Activated CD4-positive, alpha-beta T cell treated with anti-CD3 and anti-CD28 coated beads, Interleukin-2, amount 10 ng/mL, durations not matched to agents 24 days and 14 days (primary cell): ENCODE measurements at regions of chr9 and their contacts with region 1.

Region 1: DNA sequence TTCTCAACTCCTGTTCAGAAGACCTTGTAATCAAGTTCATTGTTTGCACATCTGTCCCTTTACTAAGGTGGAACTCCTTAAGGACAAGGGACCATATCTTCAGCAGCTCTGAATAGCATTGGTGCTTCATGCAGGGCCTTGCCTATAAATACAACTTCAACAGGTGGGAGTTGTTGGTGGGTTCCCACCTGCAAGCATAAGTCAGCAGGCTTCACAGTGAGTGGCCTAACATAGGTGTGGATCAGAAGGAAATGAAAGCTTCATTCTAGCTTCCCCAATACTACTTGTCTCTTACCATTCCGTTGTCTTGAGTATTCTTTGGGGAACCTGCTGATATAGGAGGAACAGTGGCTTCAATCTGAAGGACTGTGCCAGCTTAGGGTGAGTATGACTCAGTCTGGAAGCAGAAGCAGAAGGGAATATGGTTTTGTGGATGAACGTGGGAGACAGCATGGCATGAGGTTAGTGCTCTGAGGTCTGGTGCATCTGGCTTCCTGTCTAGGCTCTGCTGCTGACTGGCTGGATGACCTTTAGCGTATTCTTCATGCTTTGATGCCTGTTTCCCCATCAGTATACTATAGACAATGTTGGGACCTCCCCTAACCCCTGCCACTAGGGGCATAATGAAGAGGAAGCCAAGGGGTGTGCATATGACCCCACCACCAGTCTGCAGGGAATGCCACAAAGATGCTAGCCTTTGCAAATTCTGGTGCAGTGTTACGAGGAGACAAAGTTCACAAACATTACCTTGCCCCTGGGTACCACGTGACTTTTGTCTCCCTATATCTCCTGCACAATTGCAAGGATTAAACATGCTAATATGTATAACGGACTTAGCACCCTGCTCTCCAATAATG is 192.3 kb downstream of the PALM2AKAP2 start:
- DNase-seq: peak; percentile 71
- H3K4me3 Mint-ChIP-seq: peak overlapping the region; percentile 18
- H3K27ac Mint-ChIP-seq: peak overlapping the region; percentile 82
- H3K4me1 Mint-ChIP-seq: peaks cover 88% of the 10 kb centered on the region
- H3K27me3 Mint-ChIP-seq: no peaks in the 10 kb centered on the region

Region 2: DNA sequence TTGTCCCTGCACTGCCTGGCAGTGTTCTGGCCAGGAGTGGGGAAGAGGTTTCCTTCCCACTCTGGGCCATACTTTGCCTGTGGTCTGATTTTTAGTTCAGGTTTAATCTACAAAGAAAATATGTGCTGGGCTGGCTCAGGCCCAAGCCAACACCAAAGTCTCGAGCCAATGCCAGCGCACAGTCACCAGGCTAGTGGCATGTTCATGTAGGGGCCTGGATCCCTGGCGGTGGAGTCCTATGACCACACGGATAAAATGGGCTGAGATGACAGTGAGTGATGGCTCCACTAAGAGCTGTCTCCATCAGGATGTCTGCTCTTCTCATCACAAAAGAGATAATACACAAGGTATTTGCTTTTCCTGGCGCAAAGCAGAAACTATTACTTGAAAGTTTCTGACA is 381.3 kb before region 1 on chr9:
- intact Hi-C with region 1: no loop called
- DNase-seq: no peak
- H3K4me3 Mint-ChIP-seq: no peak overlapping the region
- H3K27ac Mint-ChIP-seq: no peak overlapping the region
- H3K4me1 Mint-ChIP-seq: no peaks in the 10 kb centered on the region
- H3K27me3 Mint-ChIP-seq: peaks cover 7% of the 10 kb centered on the region

Region 3: GRCh38 chr9:109875495-109876129 is 96.6 kb before region 1 on chr9:
- intact Hi-C with region 1: no loop called
- DNase-seq: no peak
- H3K4me3 Mint-ChIP-seq: no peak overlapping the region
- H3K27ac Mint-ChIP-seq: no peak overlapping the region
- H3K4me1 Mint-ChIP-seq: peaks cover 12% of the 10 kb centered on the region
- H3K27me3 Mint-ChIP-seq: peaks cover 20% of the 10 kb centered on the region

Region 4: DNA sequence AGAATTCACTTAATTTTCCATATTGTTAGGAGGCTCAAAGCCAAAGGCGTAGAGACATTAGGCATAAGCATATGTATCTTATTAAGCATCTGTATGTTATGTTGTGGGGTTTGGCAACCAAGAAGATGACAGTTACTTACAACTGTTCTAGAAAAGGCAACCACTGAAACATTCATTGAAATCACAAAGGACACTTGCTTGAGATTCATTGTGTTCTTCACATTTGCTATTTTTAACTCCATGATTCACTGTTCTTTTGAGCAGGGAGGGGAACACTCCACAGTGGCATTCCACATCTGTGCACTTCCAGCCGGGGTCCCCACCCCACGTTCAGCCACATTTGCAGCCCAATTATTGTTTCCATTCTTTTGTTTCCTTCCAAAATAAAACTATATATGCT is 85.2 kb before region 1 on chr9:
- intact Hi-C with region 1: loop called (anchors 1 kb)
- DNase-seq: no peak
- H3K4me3 Mint-ChIP-seq: peak overlapping the region; percentile 75
- H3K27ac Mint-ChIP-seq: peak overlapping the region; percentile 94
- H3K4me1 Mint-ChIP-seq: peaks cover 69% of the 10 kb centered on the region
- H3K27me3 Mint-ChIP-seq: no peaks in the 10 kb centered on the region

Region 5: GRCh38 chr9:109918339-109919163 is 53.7 kb before region 1 on chr9:
- intact Hi-C with region 1: loop called (anchors 1 kb)
- DNase-seq: peak; percentile 85
- H3K4me3 Mint-ChIP-seq: peak overlapping the region; percentile 85
- H3K27ac Mint-ChIP-seq: peak overlapping the region; percentile 97
- H3K4me1 Mint-ChIP-seq: peaks cover 50% of the 10 kb centered on the region
- H3K27me3 Mint-ChIP-seq: no peaks in the 10 kb centered on the region

Region 6: DNA sequence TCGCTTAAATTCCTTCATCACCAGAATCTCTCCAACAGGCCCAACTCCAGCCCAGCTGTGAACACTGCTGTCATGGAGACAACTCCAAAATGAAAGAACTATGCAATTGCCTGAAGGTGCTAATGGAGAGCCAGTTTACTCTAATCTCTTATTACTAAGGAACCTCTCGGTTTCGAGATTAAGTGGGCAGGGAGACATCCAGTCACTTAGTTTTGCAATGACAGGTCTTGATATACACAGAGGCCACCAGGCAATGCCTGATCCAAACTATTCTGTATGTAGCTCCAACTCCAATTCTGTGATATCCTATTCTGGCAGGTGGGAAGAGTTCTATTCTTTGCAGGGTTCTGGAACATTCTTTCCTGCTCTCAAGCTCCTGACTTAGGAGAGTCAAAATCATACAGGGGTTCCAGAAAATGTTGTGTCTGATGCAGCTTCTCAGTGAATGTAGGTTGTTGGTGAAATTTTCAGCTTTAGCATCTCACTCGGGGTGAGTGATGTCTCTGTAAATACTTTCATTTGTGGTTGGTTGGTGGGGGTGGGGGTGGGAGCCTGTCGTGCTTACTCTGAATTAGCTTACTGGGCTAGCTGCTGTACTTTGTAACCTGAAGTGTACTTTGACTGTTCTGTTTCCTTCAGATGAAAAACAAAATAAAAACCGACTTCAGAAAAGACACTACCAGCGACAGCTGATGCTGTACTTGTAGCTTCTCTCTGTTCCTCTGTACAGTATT is 21.4 kb before region 1 on chr9:
- intact Hi-C with region 1: loop called (anchors 1 kb)
- DNase-seq: peak; percentile 72
- H3K4me3 Mint-ChIP-seq: peak overlapping the region; percentile 65
- H3K27ac Mint-ChIP-seq: peak overlapping the region; percentile 93
- H3K4me1 Mint-ChIP-seq: peaks cover 33% of the 10 kb centered on the region
- H3K27me3 Mint-ChIP-seq: no peaks in the 10 kb centered on the region

Region 7: GRCh38 chr9:110021891-110022290 is 49.6 kb after region 1 on chr9:
- intact Hi-C with region 1: loop called (anchors 2 kb)
- DNase-seq: peak; percentile 60
- H3K4me3 Mint-ChIP-seq: peak overlapping the region; percentile 6
- H3K27ac Mint-ChIP-seq: peak overlapping the region; percentile 8
- H3K4me1 Mint-ChIP-seq: peaks cover 11% of the 10 kb centered on the region
- H3K27me3 Mint-ChIP-seq: no peaks in the 10 kb centered on the region

Region 8: GRCh38 chr9:110143950-110144545 is 171.8 kb after region 1 on chr9:
- intact Hi-C with region 1: loop called (anchors 1 kb)
- DNase-seq: peak; percentile 84
- H3K4me3 Mint-ChIP-seq: peak overlapping the region; percentile 73
- H3K27ac Mint-ChIP-seq: peak overlapping the region; percentile 95
- H3K4me1 Mint-ChIP-seq: peaks cover 72% of the 10 kb centered on the region
- H3K27me3 Mint-ChIP-seq: no peaks in the 10 kb centered on the region

Region 9: DNA sequence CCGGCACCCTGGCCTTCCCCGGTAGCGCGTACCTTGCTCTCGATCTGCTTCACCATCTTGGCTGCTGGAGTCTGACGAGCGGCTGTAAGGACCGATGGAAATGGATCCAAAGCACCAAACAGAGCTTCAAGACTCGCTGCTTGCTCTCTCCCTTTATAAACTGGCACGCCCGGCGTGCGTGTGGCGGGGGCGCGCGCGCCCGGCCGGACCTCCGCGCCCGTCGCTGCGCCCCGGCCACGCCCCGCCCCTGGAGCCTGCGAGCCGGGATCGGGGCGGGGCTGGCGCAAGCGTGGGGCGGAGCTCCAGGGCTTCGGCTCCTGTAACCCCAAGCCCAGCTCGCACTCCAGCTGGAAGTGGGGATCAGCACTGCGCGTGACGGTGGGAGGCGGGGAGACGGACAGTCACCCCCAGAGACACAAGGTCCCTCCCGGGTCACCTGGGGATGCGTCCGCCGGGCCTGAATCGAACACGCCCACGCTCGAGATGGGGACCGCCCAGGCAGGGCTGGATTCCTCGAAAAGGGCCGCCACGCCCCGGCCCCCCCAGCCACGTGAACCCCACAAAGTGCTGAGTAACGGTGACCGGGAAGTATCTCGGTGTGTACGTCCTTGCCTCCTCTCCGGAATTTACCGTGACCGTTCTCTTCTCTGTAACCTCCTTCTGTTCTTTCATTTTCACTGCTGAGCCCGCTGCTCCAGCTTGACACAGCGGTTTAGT is 284.3 kb after region 1 on chr9 and contains the start of gene TXN:
- intact Hi-C with region 1: loop called (anchors 2 kb)
- DNase-seq: peak; percentile 96
- H3K4me3 Mint-ChIP-seq: peak within 1 kb of the TSS; percentile 96
- H3K27ac Mint-ChIP-seq: peak within 1 kb of the TSS; percentile 99
- H3K4me1 Mint-ChIP-seq: peaks cover 43% of the 10 kb centered on the region
- H3K27me3 Mint-ChIP-seq: peaks cover 4% of the 10 kb centered on the region
- total RNA-seq, gene TXN: 463 TPM in 2 replicates

Region 10: DNA sequence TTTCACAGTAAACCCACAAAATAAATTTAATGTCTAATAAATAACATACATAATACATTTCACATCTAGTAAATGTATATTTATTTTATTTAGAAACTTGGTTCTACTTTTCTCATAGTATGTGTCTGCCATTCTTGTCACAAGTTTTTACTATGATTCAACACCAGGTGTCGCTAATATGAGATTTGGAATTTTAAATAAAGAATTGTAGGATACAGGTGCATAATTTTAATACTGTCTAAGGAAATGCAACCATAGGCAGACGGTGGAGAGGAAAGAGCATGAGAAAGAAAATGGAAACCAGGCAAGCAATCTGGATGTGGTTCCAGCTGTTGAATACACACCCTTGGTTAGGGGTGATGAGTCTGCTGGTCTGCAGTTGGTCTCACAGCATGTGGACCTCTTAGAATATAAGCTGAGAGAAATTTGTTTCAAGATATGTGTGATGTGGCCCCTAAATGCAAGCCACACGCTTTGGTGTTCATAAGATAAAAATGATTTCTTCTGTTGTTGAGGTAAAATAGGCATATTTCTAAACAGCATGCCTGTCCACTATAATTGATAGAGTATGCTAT is 480.1 kb after region 1 on chr9:
- intact Hi-C with region 1: no loop called
- DNase-seq: no peak
- H3K4me3 Mint-ChIP-seq: no peak overlapping the region
- H3K27ac Mint-ChIP-seq: no peak overlapping the region
- H3K4me1 Mint-ChIP-seq: no peaks in the 10 kb centered on the region
- H3K27me3 Mint-ChIP-seq: no peaks in the 10 kb centered on the region

Region 11: DNA sequence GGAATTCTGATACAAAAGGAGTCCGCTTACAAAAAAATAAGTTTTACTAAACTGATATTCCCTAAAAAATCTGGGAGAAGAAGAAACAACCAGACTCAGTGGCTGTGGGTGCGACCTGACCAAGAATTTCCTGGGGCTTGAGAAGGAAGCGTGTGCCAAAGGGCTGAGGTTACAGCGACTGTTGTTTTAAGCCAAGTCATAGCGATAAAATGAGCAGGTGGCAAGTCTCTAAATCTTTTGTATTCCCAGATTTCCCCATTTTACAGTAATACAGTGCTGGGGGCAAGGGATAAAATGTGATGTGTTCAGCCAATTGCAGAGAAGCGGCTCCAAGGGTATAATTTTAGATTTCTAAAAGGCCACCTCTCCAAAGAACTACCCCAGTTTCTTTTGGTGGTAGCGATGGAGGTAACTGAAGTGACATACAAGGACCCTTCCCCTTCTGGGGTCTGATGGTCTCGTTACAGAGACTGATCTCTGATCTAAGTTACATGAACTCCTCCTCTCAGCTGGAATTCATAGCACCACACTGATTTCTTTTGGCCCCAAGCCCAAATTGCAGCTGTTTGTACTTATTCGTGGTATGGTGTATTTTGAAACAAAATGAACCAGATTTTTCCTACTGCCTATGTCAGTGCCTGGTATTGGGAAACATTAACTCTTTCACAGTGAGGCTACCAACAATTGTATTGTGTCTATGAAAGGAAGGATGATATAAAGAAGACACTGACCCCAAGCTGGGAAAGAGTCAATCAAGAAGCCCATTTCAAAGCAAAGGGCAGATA is 1024.4 kb after region 1 on chr9:
- intact Hi-C with region 1: no loop called
- DNase-seq: no peak
- H3K4me3 Mint-ChIP-seq: no peak overlapping the region
- H3K27ac Mint-ChIP-seq: no peak overlapping the region
- H3K4me1 Mint-ChIP-seq: no peaks in the 10 kb centered on the region
- H3K27me3 Mint-ChIP-seq: no peaks in the 10 kb centered on the region